ENCODE measurements at regions of chr2 and their contacts with region 1.

Region 1: DNA sequence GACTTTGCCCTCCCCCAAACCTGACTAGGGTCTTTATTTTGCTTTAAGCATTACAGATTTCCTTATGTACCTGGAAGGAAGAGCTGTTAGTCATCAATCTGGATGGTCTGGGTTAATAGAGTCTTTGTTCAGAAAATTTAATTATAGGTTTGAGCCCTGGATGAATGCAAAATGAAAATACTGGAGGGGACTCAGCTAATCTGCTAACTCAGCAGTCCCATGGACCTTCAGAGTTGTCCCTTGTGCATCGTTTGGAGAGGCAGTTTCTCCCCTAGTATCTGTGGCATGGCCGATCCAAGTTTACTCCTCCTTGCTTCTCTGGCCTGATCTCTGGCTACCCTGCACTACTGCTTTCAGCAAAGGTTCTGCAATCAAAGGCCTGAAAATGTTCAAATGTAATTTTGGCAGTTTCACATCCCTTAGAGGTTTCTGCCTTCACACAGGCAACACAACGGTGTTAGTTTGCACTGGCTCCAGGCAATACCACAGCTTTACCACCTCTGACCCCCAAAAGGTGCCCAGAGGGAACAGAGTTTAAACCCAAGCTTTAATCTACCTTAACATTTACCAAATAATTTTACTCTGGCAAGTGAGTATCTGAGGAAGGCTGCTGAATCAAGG is 134.3 kb downstream of the THADA start:
- DNase-seq: peak; percentile 81
- ATAC-seq: peak; percentile 97
- H3K4me3 ChIP-seq: peak overlapping the region; percentile 12; the same call in 1 of the 2 replicates
- H3K27ac ChIP-seq: peak overlapping the region; percentile 76
- H3K4me1 ChIP-seq: peaks cover 40% of the 10 kb centered on the region
- H3K27me3 ChIP-seq: no peaks in the 10 kb centered on the region
- CTCF ChIP-seq: no peak
- EP300 ChIP-seq: peak; percentile 53 to 62; a peak in 2 of 4 replicates
- POLR2A ChIP-seq: peak; percentile 54
- RAD21 ChIP-seq: peak; percentile 24; the same call in 1 of the 2 replicates

Region 2: DNA sequence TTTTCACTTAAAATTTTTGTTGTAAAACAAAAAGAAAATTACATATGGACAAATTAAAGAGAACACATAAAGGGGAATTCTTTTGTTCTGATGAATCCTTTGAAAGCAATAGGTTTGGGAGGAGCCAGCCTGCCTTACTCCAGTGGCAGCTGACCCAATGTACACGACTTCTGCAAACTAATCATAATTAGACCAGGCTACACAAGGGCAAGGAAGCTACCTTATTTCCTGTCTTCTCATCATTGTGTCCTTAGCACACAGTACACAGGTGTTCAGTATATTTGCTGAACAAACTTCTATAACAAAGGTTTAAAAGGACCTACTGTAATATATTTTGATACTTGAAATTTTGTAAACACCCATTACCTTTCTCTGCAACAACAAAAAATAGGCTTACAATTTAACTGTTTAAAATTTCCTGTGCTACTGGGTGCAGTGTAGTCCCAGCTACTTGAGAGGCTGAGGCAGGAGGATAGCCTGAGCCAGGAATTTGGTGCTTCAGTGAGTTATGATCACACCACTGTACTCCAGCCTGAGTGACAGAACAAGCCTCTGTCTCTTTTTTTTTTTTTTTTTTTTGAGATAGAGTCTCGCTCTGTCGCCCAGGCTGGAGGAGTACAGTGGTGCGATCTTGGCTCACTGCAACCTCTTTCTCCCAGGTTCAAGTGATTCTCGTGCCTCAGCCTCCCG is 986.7 kb before region 1 on chr2:
- CTCF ChIA-PET with region 1: no interaction called
- POLR2A ChIA-PET with region 1: no interaction called
- RAD21 ChIA-PET with region 1: no interaction called
- SMC1A ChIA-PET with region 1: no interaction called
- in situ Hi-C with region 1: no loop called
- intact Hi-C with region 1: no loop called
- DNase-seq: no peak
- ATAC-seq: no peak
- H3K4me3 ChIP-seq: no peak overlapping the region
- H3K27ac ChIP-seq: no peak overlapping the region
- H3K4me1 ChIP-seq: no peaks in the 10 kb centered on the region
- H3K27me3 ChIP-seq: no peaks in the 10 kb centered on the region
- CTCF ChIP-seq: no peak
- EP300 ChIP-seq: no peak
- POLR2A ChIP-seq: no peak
- RAD21 ChIP-seq: no peak

Region 3: GRCh38 chr2:43402452-43402944 is 59.1 kb before region 1 on chr2:
- CTCF ChIA-PET with region 1: interaction called, 6 read pairs
- POLR2A ChIA-PET with region 1: interaction called, 29 read pairs
- RAD21 ChIA-PET with region 1: interaction called, 21 read pairs
- SMC1A ChIA-PET with region 1: interaction called, 22 read pairs
- in situ Hi-C with region 1: no loop called
- intact Hi-C with region 1: loop called (anchors 2 kb)
- DNase-seq: peak; percentile 79
- ATAC-seq: peak; percentile 73
- H3K4me3 ChIP-seq: peak overlapping the region; percentile 40
- H3K27ac ChIP-seq: peak overlapping the region; percentile 97
- H3K4me1 ChIP-seq: peaks cover 64% of the 10 kb centered on the region
- H3K27me3 ChIP-seq: no peaks in the 10 kb centered on the region
- CTCF ChIP-seq: no peak
- EP300 ChIP-seq: peak in 1 of 2 experiments; percentile 22; a peak in 1 of 4 replicates
- POLR2A ChIP-seq: peak; percentile 38
- RAD21 ChIP-seq: peak; percentile 34

Region 4: DNA sequence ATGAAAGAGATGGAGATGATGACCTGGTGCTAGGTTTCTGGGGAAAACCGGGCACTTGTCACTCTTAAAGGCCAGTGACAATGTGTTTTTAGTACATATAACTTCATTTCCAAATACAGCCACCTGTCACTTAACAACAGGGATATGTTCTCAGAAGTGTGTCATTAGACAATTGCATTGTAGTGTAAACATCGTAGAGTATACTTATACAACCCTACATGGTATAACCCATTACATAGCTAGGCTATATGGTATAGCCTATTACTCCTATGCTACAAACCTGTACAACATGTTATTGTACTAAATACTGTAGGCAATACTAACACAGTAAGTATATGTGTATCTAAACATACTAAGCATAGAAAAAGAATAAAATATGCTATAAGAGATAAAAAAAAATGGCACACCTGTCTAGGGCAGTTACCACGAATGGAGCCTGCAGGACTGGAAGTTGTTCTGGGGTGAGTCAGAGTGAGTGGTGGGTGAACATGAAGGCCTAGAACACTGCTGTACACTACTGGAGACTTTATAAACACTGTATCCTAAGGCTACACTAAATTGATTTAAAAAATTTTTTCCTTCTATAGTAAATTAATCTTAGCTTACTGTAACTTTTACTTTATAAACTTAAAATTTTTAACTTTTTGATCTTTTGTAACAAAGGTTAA is 11.1 kb after region 1 on chr2:
- CTCF ChIA-PET with region 1: interaction called, 13 read pairs
- POLR2A ChIA-PET with region 1: interaction called, 11 read pairs
- RAD21 ChIA-PET with region 1: interaction called, 64 read pairs
- SMC1A ChIA-PET with region 1: interaction called, 84 read pairs
- in situ Hi-C with region 1: no loop called
- intact Hi-C with region 1: no loop called
- DNase-seq: no peak
- ATAC-seq: no peak
- H3K4me3 ChIP-seq: no peak overlapping the region
- H3K27ac ChIP-seq: no peak overlapping the region
- H3K4me1 ChIP-seq: no peaks in the 10 kb centered on the region
- H3K27me3 ChIP-seq: no peaks in the 10 kb centered on the region
- CTCF ChIP-seq: no peak
- EP300 ChIP-seq: no peak
- POLR2A ChIP-seq: no peak
- RAD21 ChIP-seq: no peak